CD4-positive, alpha-beta memory T cell (primary cell): ENCODE measurements at regions of chr5 and their contacts with region 1.

Region 1: DNA sequence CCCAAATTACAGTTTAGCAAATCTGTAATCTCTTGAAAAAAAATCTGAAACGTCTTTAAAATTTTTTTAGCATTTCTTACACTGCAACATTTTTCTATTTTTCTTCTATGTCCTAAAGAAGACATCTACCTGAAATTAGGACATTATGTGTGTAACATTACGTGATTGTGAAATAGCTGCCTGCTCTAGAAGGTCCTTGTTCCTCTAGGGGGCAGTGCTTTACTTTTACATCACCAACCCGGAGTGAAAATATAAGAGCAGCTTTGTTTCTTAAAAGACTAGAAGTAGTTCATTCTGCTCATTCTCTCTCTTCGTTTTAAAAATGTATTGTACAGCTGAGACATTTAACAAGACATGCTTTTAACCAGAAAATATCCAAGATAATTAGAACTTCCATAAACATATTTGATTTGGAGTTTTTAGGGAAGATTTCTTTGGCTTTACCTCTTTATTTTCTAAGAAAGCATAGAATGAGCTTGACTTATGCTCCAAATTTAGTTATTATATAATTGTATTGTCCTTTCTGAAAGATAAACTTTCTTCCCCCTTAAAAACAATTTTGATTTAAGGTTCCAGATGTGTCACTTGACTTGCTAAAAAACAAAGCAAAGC is 48.1 kb upstream of the RIOK2 start:
- DNase-seq: peak in 4 of 5 donors; percentile 31 to 44 (median 37)
- H3K4me3 ChIP-seq: no peak overlapping the region
- H3K4me3 Mint-ChIP-seq: no peak overlapping the region
- H3K27ac ChIP-seq: no peak overlapping the region
- H3K27ac Mint-ChIP-seq: no peak overlapping the region
- H3K4me1 ChIP-seq: no peaks in the 10 kb centered on the region
- H3K4me1 Mint-ChIP-seq: no peaks in the 10 kb centered on the region
- H3K27me3 ChIP-seq: no peaks in the 10 kb centered on the region
- H3K27me3 Mint-ChIP-seq: peaks cover 4 to 6% of the 10 kb centered on the region in 2 donors

Region 2: DNA sequence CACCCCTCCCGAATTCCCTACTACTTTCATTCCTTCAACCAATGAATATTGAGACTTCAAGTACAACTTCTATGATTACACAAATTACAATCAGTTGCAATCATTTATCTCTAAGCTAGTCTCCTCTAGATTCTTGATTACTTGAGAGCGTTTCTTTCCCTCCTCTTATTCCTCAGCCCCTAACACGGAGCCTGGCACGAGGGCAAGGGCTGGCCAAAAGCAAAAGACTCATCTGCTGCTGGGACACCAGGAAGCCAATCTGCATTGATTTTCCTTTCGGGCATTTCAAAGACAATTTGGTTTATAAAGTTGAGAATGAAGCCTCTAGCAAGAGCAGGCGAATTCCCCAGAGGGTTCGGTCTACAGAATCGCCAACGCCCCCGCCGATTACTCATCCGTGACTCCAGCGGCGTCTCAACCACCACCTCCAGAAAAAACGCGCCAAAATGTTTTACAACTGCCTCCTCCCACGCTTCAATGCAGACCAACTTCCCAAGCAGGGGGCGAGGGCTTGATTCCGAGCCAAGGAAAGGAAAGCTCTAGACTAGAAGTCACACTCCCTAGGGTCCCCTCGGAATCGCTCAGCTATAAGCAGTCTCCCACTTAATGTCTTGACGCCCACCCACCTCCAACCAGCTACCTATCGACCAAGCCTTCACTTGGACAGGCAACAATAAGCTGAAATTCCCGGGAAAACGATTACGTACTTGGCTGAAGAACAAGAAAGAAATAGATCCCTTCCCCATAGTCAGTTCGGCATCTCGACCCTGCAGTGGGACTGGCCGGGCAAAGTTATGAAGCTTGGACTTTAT is 799.5 kb before region 1 on chr5:
- CTCF ChIA-PET with region 1: no interaction called
- POLR2A ChIA-PET with region 1: no interaction called
- intact Hi-C with region 1: no loop called
- DNase-seq: no peak
- H3K4me3 ChIP-seq: no peak overlapping the region
- H3K4me3 Mint-ChIP-seq: peak overlapping the region in 1 of 8 donors; percentile 3
- H3K27ac ChIP-seq: no peak overlapping the region
- H3K27ac Mint-ChIP-seq: no peak overlapping the region
- H3K4me1 ChIP-seq: no peaks in the 10 kb centered on the region
- H3K4me1 Mint-ChIP-seq: peaks cover 6 to 22% (median 8%) of the 10 kb centered on the region in 4 donors
- H3K27me3 ChIP-seq: peaks cover 22% of the 10 kb centered on the region
- H3K27me3 Mint-ChIP-seq: peaks cover 48 to 54% of the 10 kb centered on the region in 2 donors

Region 3: DNA sequence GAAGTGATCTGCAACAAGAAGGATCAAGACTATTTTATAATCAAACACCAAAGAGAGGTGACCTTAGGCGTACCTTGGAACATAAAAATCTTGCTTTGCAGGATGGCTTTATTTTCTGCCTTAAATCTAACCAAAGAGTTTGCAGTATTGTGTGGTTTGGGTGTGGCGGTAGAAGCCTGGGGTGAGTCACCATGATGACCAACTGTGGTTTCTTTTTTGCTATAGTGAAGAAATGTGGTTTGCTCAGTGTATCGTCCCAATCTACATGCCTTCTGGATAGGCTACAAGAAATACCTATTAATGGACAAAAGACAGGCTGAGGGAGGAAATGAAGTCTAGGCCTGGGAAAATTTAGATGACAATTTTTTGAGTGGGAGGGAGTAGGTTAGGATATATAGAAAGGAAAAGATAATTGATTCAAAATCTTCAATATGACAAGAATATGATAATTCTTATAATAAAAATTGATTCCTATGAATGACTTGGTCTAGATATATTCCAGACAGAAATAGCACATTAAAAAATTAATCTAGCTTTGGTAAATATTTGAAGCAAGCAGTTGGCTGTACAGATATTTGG is 574.0 kb before region 1 on chr5:
- CTCF ChIA-PET with region 1: no interaction called
- POLR2A ChIA-PET with region 1: no interaction called
- intact Hi-C with region 1: no loop called
- DNase-seq: peak; percentile 42 to 73 (median 46)
- H3K4me3 ChIP-seq: no peak overlapping the region
- H3K4me3 Mint-ChIP-seq: peak overlapping the region; percentile 3 to 72 (median 51)
- H3K27ac ChIP-seq: no peak overlapping the region
- H3K27ac Mint-ChIP-seq: peak overlapping the region; percentile 6 to 93 (median 33)
- H3K4me1 ChIP-seq: peaks cover 40% of the 10 kb centered on the region
- H3K4me1 Mint-ChIP-seq: peaks cover 21 to 56% (median 43%) of the 10 kb centered on the region in 4 donors
- H3K27me3 ChIP-seq: no peaks in the 10 kb centered on the region
- H3K27me3 Mint-ChIP-seq: peaks cover 2 to 5% of the 10 kb centered on the region in 2 donors

Region 4: DNA sequence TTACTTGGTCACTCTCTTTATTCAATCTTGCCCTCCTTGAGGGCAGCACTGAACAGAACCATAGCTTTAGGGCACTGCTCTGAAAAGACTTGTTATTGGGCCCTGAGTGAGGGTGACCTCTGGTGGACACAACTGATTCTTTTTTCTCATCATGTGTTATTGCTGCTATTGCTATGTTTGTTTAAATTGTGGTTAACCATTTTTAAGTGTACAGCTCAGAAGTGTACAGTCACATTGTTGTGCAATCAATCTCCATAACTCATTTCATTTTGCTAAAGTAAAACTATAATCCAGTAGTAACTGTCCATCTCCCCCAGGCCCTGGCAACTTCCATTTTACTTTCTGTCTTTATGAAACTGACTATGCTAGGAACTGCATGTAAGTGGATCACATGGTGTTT is 303.0 kb after region 1 on chr5:
- CTCF ChIA-PET with region 1: interaction called, 3 read pairs
- POLR2A ChIA-PET with region 1: no interaction called
- intact Hi-C with region 1: loop called (anchors 2 kb)
- DNase-seq: peak in 1 of 5 donors; percentile 7
- H3K4me3 ChIP-seq: no peak overlapping the region
- H3K4me3 Mint-ChIP-seq: no peak overlapping the region
- H3K27ac ChIP-seq: no peak overlapping the region
- H3K27ac Mint-ChIP-seq: no peak overlapping the region
- H3K4me1 ChIP-seq: no peaks in the 10 kb centered on the region
- H3K4me1 Mint-ChIP-seq: peaks cover 0 to 1% (median 0%) of the 10 kb centered on the region in 4 donors
- H3K27me3 ChIP-seq: no peaks in the 10 kb centered on the region
- H3K27me3 Mint-ChIP-seq: no peaks in the 10 kb centered on the region

Region 5: GRCh38 chr5:98796197-98796972 is 1565.3 kb after region 1 on chr5:
- CTCF ChIA-PET with region 1: interaction called, 70 read pairs
- POLR2A ChIA-PET with region 1: no interaction called
- intact Hi-C with region 1: no loop called
- DNase-seq: peak; percentile 40 to 61 (median 56)
- H3K4me3 ChIP-seq: no peak overlapping the region
- H3K4me3 Mint-ChIP-seq: no peak overlapping the region
- H3K27ac ChIP-seq: no peak overlapping the region
- H3K27ac Mint-ChIP-seq: peak overlapping the region in 1 of 7 donors; percentile 62
- H3K4me1 ChIP-seq: no peaks in the 10 kb centered on the region
- H3K4me1 Mint-ChIP-seq: peaks cover 0 to 6% (median under 1%) of the 10 kb centered on the region in 4 donors
- H3K27me3 ChIP-seq: no peaks in the 10 kb centered on the region
- H3K27me3 Mint-ChIP-seq: no peaks in the 10 kb centered on the region